GM10248 (cell line): ENCODE measurements at regions of chr19 and their contacts with region 1.

Region 1: GRCh38 chr19:4723367-4724187 is at the start of gene DPP9:
- DNase-seq: peak; percentile 100
- CTCF ChIP-seq: peak; percentile 40

Region 2: DNA sequence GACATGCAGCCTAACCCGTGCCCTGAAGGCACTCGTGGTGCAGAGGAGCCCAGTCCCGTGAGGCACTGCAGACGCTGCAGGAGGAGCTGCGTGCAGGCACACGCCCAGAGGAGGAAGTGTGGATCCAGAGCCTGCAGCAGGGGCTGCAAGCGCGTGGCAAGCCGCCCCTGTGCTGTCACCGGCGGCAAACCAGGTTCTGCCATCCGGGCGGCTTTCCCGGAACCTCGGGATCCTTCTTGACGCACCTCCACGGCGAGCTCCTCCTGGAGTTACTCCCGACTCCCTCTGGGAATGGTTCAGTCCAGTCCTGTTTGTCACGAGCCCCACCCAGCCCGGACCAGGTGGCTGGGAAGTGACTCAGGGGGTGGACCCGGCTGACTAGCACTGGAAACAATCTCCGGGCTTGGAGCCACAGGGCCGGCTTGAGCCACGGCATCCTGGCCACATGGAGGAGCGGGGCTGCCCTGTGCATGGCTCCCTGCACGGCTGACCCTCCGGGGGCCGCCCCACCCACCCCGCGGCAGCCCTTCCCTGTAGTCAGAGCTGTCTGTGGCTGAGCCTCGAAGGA is 10.1 kb before region 1 on chr19:
- CTCF ChIA-PET with region 1: interaction called, 13 read pairs
- POLR2A ChIA-PET with region 1: no interaction called
- DNase-seq: no peak
- CTCF ChIP-seq: no peak

Region 3: GRCh38 chr19:4768934-4769777 is 45.6 kb after region 1 on chr19:
- CTCF ChIA-PET with region 1: no interaction called
- POLR2A ChIA-PET with region 1: no interaction called
- DNase-seq: peak; percentile 86
- CTCF ChIP-seq: no peak